ENCODE measurements at regions of chr19 and their contacts with region 1.

Region 1: GRCh38 chr19:15154002-15154612 is 46.7 kb downstream of the NOTCH3 start:
- DNase-seq: no peak
- H3K4me3 ChIP-seq: no peak overlapping the region
- H3K27ac ChIP-seq: no peak overlapping the region
- H3K4me1 ChIP-seq: no peaks in the 10 kb centered on the region
- H3K27me3 ChIP-seq: peaks cover 0 to 4% (median 0%) of the 10 kb centered on the region in 4 donors
- CTCF ChIP-seq: peak; percentile 16 to 70 (median 43)
- POLR2A ChIP-seq: no peak

Region 2: GRCh38 chr19:15091901-15092753 is 62.0 kb before region 1 on chr19:
- intact Hi-C with region 1: loop called (anchors 5 kb)
- DNase-seq: no peak
- H3K4me3 ChIP-seq: no peak overlapping the region
- H3K27ac ChIP-seq: peak overlapping the region in 1 of 4 donors; percentile 22
- H3K4me1 ChIP-seq: peaks cover 0 to 7% (median 4%) of the 10 kb centered on the region in 3 donors
- H3K27me3 ChIP-seq: peaks cover 0 to 14% (median 0%) of the 10 kb centered on the region in 4 donors
- CTCF ChIP-seq: peak; percentile 50 to 68 (median 58)
- POLR2A ChIP-seq: no peak

Region 3: GRCh38 chr19:15107061-15108010 is 46.8 kb before region 1 on chr19 and contains the start of gene SYDE1:
- intact Hi-C with region 1: loop called (anchors 5 kb)
- DNase-seq: no peak
- H3K4me3 ChIP-seq: peak within 1 kb of the TSS; percentile 58 to 89 (median 78)
- H3K27ac ChIP-seq: peak within 1 kb of the TSS; percentile 85 to 94 (median 92)
- H3K4me1 ChIP-seq: peaks cover 8 to 30% (median 15%) of the 10 kb centered on the region in 3 donors
- H3K27me3 ChIP-seq: peaks cover 0 to 8% (median 0%) of the 10 kb centered on the region in 4 donors
- CTCF ChIP-seq: no peak
- POLR2A ChIP-seq: peak in 1 of 4 donors; percentile 50
- total RNA-seq, gene SYDE1: 1.4 to 10.3 (median 4.6) TPM

Measured in esophagus squamous epithelium (tissue), 5 donors.